Panc1 (cell line): ENCODE measurements at regions of chr20 and their contacts with region 1.

Region 1: GRCh38 chr20:32869562-32869961 is 10.8 kb downstream of the EFCAB8 start:
- DNase-seq: no peak
- ATAC-seq: no peak
- H3K4me3 ChIP-seq: no peak overlapping the region
- H3K27ac ChIP-seq: no peak overlapping the region
- H3K4me1 ChIP-seq: no peaks in the 10 kb centered on the region
- H3K27me3 ChIP-seq: no peaks in the 10 kb centered on the region
- CTCF ChIP-seq: no peak

Region 2: GRCh38 chr20:32819992-32820710 is 49.4 kb before region 1 on chr20:
- CTCF ChIA-PET with region 1: no interaction called
- POLR2A ChIA-PET with region 1: interaction called, 10 read pairs
- in situ Hi-C with region 1: no loop called
- intact Hi-C with region 1: no loop called
- DNase-seq: no peak
- ATAC-seq: peak; percentile 94
- H3K4me3 ChIP-seq: peak overlapping the region; percentile 61 to 96
- H3K27ac ChIP-seq: peak overlapping the region; percentile 84
- H3K4me1 ChIP-seq: peaks cover 24% of the 10 kb centered on the region
- H3K27me3 ChIP-seq: no peaks in the 10 kb centered on the region
- CTCF ChIP-seq: no peak

Region 3: GRCh38 chr20:32886652-32887051 is 17.1 kb after region 1 on chr20:
- CTCF ChIA-PET with region 1: no interaction called
- POLR2A ChIA-PET with region 1: no interaction called
- in situ Hi-C with region 1: no loop called
- intact Hi-C with region 1: no loop called
- DNase-seq: no peak
- ATAC-seq: no peak
- H3K4me3 ChIP-seq: no peak overlapping the region
- H3K27ac ChIP-seq: no peak overlapping the region
- H3K4me1 ChIP-seq: no peaks in the 10 kb centered on the region
- H3K27me3 ChIP-seq: no peaks in the 10 kb centered on the region
- CTCF ChIP-seq: no peak